ENCODE measurements at regions of chr11 and their contacts with region 1.

Region 1: GRCh38 chr11:27485930-27486773 is 13.6 kb upstream of the LGR4 start:
- DNase-seq: peak; percentile 57
- H3K4me3 Mint-ChIP-seq: no peak overlapping the region
- H3K27ac Mint-ChIP-seq: no peak overlapping the region
- H3K4me1 Mint-ChIP-seq: no peaks in the 10 kb centered on the region
- H3K27me3 Mint-ChIP-seq: no peaks in the 10 kb centered on the region

Region 2: DNA sequence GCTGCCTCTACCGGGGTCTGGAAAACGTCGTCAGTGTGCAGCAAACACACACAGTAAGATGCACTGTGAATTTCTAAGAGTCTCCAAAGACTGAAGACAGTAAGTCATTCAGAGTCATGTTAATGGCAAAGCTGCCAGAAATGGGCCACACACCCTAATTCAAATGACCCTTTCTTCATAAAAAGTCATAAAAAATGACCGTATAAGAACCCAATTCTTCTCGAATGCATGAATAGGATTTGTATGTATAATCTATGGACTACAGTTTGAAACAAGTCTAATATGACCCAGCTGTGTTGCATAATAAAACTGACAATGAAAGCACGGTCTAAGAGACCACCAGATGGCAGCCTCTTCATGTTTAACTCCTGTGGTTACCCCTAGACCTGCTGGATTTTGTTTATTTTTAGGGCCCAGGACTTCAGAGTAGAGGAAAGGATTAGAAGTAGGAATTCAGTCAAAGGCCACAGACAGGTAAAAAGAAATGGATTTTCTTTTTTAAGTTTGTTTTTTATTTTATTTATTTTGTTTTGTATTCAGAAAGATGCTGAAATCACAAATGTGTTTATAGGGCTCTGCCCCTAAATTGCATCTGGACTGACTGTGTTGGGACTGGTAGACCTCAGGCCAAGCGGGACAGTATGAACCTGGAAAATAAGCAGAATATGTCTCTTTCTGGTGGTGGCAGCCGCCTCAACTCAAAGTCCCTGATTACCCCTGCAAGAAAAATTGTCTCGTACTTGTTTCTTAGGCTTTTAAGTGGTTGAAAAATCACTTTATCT is 732.2 kb before region 1 on chr11:
- CTCF ChIA-PET with region 1: interaction called, 3 read pairs
- intact Hi-C with region 1: loop called (anchors 1 kb)
- DNase-seq: peak; percentile 17
- H3K4me3 Mint-ChIP-seq: no peak overlapping the region
- H3K27ac Mint-ChIP-seq: no peak overlapping the region
- H3K4me1 Mint-ChIP-seq: no peaks in the 10 kb centered on the region
- H3K27me3 Mint-ChIP-seq: no peaks in the 10 kb centered on the region

Region 3: DNA sequence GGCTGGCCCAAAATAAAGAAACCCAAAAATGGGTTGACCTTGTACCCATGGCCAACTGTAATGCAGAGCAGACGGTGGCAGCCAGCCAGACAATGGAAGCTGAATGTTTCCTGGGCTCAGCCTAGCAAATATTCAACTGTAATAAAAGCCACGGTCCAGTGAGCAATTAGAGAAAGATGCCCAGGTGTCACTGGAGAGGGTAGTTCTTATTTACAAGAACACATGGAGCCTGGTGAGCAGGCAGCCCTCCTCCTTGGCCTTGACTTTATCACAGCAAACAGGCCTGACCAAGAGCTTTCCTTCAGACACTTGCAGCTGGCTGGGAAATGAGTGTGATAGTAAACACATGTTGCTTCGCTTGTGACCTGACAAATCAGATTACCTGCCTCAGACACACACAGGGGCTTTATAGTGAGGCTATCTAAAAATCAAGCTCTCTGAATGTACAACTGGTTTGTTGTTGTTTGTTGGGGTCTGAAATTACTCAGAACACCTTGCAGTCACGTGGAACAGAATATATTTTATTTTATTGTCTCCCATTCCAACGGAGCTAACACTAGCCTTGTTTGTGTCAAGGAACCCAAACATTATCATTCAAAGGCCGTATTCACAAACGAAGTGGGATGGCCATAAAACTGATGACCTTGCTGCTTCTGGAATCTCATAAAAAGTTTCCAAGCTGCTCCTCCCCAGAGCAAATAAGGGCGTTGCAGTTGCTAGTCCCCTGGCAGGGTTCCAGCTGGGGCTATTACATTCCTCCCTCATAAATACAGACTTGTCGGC is 284.5 kb before region 1 on chr11:
- CTCF ChIA-PET with region 1: interaction called, 6 read pairs
- intact Hi-C with region 1: loop called (anchors 1 kb)
- DNase-seq: no peak
- H3K4me3 Mint-ChIP-seq: no peak overlapping the region
- H3K27ac Mint-ChIP-seq: no peak overlapping the region
- H3K4me1 Mint-ChIP-seq: no peaks in the 10 kb centered on the region
- H3K27me3 Mint-ChIP-seq: peaks cover 2% of the 10 kb centered on the region

Region 4: GRCh38 chr11:27472398-27473016 is 13.6 kb before region 1 on chr11 and contains the start of gene LGR4:
- CTCF ChIA-PET with region 1: interaction called, 10 read pairs
- intact Hi-C with region 1: no loop called
- DNase-seq: peak; percentile 77
- H3K4me3 Mint-ChIP-seq: peak within 1 kb of the TSS; percentile 93
- H3K27ac Mint-ChIP-seq: no peak within 1 kb of the TSS
- H3K4me1 Mint-ChIP-seq: peaks cover 12% of the 10 kb centered on the region
- H3K27me3 Mint-ChIP-seq: peaks cover 7% of the 10 kb centered on the region
- total RNA-seq, gene LGR4: 0.12 to 0.19 TPM

Region 5: GRCh38 chr11:27514558-27514957 is 28.4 kb after region 1 on chr11:
- CTCF ChIA-PET with region 1: no interaction called
- intact Hi-C with region 1: no loop called
- DNase-seq: no peak
- H3K4me3 Mint-ChIP-seq: no peak overlapping the region
- H3K27ac Mint-ChIP-seq: no peak overlapping the region
- H3K4me1 Mint-ChIP-seq: no peaks in the 10 kb centered on the region
- H3K27me3 Mint-ChIP-seq: peaks cover 7% of the 10 kb centered on the region

Region 6: DNA sequence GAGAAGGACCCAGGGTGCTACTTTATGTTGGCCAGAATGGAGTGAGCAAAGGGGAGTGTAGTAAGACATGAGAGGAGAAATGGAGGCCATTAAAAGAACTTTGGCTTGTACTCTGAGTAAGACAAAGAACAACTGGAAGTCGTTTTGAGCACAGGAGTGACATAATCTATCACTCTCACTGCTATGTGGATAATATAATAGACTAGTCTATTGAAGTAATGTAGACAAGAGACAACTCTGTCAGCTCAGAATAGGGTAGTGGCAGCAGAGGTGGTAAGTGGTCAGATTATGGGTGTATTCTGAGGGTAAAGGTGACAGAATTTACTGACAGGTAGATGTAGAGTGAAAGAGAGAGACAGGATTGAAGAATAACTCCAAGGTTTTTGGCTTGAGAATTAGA is 613.6 kb after region 1 on chr11:
- CTCF ChIA-PET with region 1: no interaction called
- intact Hi-C with region 1: no loop called
- DNase-seq: no peak
- H3K4me3 Mint-ChIP-seq: no peak overlapping the region
- H3K27ac Mint-ChIP-seq: no peak overlapping the region
- H3K4me1 Mint-ChIP-seq: no peaks in the 10 kb centered on the region
- H3K27me3 Mint-ChIP-seq: no peaks in the 10 kb centered on the region